ENCODE measurements at regions of chr17 and their contacts with region 1.

Region 1: DNA sequence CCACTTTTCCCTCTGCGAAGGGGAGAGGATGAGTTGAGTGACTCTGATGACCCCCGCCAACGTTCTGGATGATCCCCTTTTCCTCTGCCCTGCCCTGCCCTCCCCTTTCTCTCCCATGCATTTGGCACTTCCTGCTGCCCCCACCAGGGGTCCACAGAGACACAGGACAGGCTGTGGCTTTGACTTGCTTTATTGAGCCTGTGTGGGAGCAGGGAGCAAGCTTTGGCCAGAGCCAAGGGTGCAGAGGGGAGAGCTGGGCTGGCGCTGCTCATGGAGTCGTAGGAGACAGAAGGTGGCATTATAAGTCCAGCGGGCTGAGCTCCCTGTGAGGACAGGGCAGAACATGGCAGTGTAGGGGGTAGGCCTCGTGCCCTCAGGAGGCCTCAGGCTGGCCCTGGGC is 1.6 kb downstream of the PPY start:
- DNase-seq: no peak
- ATAC-seq: no peak
- H3K4me3 Mint-ChIP-seq: no peak overlapping the region
- H3K27ac Mint-ChIP-seq: no peak overlapping the region
- H3K4me1 Mint-ChIP-seq: peaks cover 8% of the 10 kb centered on the region
- H3K27me3 Mint-ChIP-seq: peaks cover 23% of the 10 kb centered on the region
- CTCF ChIP-seq: no peak

Region 2: DNA sequence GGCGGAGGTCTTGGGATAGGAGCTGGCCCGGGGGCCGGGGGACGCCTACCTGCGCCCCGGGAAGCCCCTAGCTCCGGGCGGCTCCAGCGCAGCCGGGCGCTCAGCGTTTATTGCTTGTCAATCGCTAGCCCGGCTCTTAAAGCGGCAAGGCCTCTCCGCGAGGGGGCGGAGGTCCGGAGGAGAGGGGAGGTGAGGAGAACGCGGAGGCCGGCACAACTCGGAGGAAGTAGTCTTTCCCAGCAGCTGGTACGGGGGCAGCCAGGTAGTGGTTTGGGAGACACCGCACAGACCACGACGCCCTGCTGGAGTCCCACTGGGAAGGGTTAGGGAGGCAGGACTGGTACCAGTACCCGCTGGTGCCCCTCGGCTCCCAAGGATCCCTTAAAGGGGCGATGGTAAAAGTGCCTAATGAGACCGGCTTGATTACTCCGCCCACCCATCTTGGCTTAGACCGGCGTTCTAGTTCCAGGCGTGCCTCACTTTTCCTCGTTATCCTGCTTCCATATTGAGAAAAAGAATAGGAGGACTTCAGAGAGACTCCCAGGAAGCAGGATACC is 33.1 kb before region 1 on chr17 and contains the start of gene MPP2:
- CTCF ChIA-PET with region 1: interaction called, 10 read pairs
- POLR2A ChIA-PET with region 1: no interaction called
- intact Hi-C with region 1: loop called (anchors 2 kb)
- DNase-seq: peak; percentile 42
- ATAC-seq: peak; percentile 63
- H3K4me3 Mint-ChIP-seq: peak within 1 kb of the TSS; percentile 73
- H3K27ac Mint-ChIP-seq: peak within 1 kb of the TSS; percentile 35
- H3K4me1 Mint-ChIP-seq: peaks cover 23% of the 10 kb centered on the region
- H3K27me3 Mint-ChIP-seq: peaks cover 50% of the 10 kb centered on the region
- CTCF ChIP-seq: no peak
- total RNA-seq, gene MPP2: not detected in 2 replicates

Region 3: DNA sequence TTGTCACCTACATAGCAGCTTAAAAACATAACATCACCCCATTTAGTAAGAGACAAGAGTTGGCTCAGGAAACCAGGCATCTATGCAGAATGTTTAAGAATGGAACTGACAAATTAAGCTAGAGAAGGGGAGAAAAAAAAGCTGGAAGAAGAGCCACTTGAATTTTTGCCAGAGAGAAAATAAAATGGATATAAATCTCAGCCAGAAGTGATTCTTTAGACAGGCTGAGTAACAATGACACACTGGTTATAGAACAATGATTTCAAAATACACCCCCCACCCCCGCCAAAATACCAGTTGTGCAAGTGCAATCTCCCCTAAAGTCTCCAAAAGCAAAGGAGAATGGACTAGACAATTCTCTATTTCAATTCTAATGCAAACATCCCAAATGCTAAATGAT is 103.4 kb after region 1 on chr17:
- CTCF ChIA-PET with region 1: interaction called, 88 read pairs
- POLR2A ChIA-PET with region 1: interaction called, 3 read pairs
- intact Hi-C with region 1: loop called (anchors 1 kb)
- DNase-seq: no peak
- ATAC-seq: no peak
- H3K4me3 Mint-ChIP-seq: no peak overlapping the region
- H3K27ac Mint-ChIP-seq: no peak overlapping the region
- H3K4me1 Mint-ChIP-seq: peaks cover 6% of the 10 kb centered on the region
- H3K27me3 Mint-ChIP-seq: no peaks in the 10 kb centered on the region
- CTCF ChIP-seq: no peak

Region 4: GRCh38 chr17:44123356-44124117 is 182.9 kb after region 1 on chr17 and contains the start of gene HDAC5:
- CTCF ChIA-PET with region 1: no interaction called
- POLR2A ChIA-PET with region 1: no interaction called
- intact Hi-C with region 1: no loop called
- DNase-seq: peak; percentile 95
- ATAC-seq: peak; percentile 96
- H3K4me3 Mint-ChIP-seq: peak within 1 kb of the TSS; percentile 95
- H3K27ac Mint-ChIP-seq: peak within 1 kb of the TSS; percentile 97
- H3K4me1 Mint-ChIP-seq: peaks cover 49% of the 10 kb centered on the region
- H3K27me3 Mint-ChIP-seq: no peaks in the 10 kb centered on the region
- CTCF ChIP-seq: no peak
- total RNA-seq, gene HDAC5: 28.4 and 35.1 TPM in 2 replicates

Region 5: DNA sequence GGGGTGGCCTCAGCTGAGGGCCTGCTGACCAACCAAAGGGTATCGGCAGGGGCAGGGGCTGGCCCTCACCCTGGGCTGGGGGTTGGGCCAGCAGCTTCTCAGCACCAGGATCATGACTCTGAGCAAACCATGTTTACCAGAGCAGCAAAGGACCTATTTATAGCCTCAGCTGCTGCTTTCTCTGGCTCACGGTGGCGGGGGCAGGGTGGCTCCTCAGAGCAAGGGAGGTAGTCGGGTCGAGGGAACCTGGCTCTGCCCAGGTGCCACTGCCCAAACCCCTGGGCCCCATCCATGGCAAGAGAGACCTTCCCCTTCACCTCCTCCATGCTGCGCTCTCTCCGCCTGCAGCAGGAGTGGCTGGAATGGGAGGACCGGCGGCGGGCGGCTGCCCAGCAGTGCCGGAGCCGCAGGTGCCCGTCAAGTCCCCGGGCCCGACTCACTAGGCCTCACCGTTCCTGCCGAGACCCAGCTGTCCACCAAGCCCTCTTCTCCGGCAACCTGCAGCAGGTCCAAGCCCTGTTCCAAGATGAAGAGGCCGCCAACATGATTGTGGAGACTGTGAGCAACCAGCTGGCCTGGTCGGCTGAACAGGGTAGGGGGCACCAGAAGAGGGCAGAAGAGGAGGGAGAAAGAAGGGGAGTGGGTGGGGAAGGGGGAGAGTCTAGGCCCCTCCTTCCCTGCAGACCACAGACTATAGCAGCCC is 230.0 kb after region 1 on chr17 and contains the start of gene ASB16:
- CTCF ChIA-PET with region 1: interaction called, 18 read pairs
- POLR2A ChIA-PET with region 1: interaction called, 8 read pairs
- intact Hi-C with region 1: loop called (anchors 1 kb)
- DNase-seq: no peak
- ATAC-seq: no peak
- H3K4me3 Mint-ChIP-seq: no peak within 1 kb of the TSS
- H3K27ac Mint-ChIP-seq: no peak within 1 kb of the TSS
- H3K4me1 Mint-ChIP-seq: peaks cover 9% of the 10 kb centered on the region
- H3K27me3 Mint-ChIP-seq: no peaks in the 10 kb centered on the region
- CTCF ChIP-seq: no peak
- total RNA-seq, gene ASB16: not detected in 2 replicates

Measured in activated B cell treated with CpG ODN at 0.5 μM for 24 hours (primary cell).